Left colon (tissue), 2 donors: ENCODE measurements at regions of chr22 and their contacts with region 1.

Region 1: GRCh38 chr22:27810609-27811151 is 9.1 kb upstream of the MN1 start:
- DNase-seq: no peak
- ATAC-seq: peak; percentile 50

Region 2: GRCh38 chr22:27416511-27417420 is 393.9 kb before region 1 on chr22:
- intact Hi-C with region 1: loop called in 1 of 2 experiments (anchors 10 kb)
- DNase-seq: no peak
- ATAC-seq: no peak

Region 3: GRCh38 chr22:27755521-27756211 is 55.0 kb before region 1 on chr22:
- intact Hi-C with region 1: no loop called
- DNase-seq: no peak
- ATAC-seq: no peak

Region 4: DNA sequence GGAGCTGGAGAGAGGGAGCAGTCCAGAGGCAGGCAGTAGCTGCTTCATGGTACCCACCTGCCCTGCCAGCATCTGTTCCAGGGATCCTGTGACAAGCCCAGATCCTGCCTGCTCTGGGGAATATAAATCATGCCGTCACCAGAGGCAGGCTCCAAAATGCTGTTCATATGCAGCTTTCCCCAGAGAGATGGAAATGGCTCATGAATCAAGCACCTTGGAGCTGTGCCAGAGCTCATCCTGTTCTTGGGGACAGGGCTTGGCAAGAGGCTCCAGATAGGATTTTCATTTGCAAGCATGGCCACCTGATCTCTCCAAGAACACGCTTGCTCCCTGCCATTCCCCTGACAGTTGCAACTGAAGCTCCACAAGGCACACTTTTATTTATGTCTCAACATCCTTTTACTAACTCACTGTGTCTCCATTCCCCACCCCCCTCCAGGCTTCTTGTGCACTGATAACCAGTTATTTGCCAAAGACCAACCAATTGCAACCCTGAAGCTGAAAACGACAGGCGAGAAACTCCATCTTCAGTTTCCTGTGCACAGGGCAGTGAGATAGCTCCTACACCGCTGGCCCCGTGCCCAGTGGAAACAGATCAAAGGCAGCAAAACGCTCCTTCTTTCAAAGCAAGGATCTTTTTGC is 224.2 kb after region 1 on chr22:
- intact Hi-C with region 1: no loop called
- DNase-seq: peak; percentile 47 to 54
- ATAC-seq: peak; percentile 34